ENCODE measurements at regions of chr10 and their contacts with region 1.

Region 1: GRCh38 chr10:7525314-7526016 is 114.6 kb upstream of the SFMBT2 start:
- DNase-seq: no peak
- H3K4me3 ChIP-seq: no peak overlapping the region
- H3K27ac ChIP-seq: no peak overlapping the region
- H3K4me1 ChIP-seq: no peaks in the 10 kb centered on the region
- H3K27me3 ChIP-seq: peaks cover 0 to 74% (median 0%) of the 10 kb centered on the region in 4 donors
- CTCF ChIP-seq: peak; percentile 52 to 87 (median 80)
- POLR2A ChIP-seq: no peak

Region 2: GRCh38 chr10:7318836-7319235 is 206.6 kb before region 1 on chr10:
- intact Hi-C with region 1: no loop called
- DNase-seq: no peak
- H3K4me3 ChIP-seq: no peak overlapping the region
- H3K27ac ChIP-seq: no peak overlapping the region
- H3K4me1 ChIP-seq: peaks cover 0 to 18% (median 3%) of the 10 kb centered on the region in 3 donors
- H3K27me3 ChIP-seq: no peaks in the 10 kb centered on the region
- CTCF ChIP-seq: no peak
- POLR2A ChIP-seq: no peak

Region 3: DNA sequence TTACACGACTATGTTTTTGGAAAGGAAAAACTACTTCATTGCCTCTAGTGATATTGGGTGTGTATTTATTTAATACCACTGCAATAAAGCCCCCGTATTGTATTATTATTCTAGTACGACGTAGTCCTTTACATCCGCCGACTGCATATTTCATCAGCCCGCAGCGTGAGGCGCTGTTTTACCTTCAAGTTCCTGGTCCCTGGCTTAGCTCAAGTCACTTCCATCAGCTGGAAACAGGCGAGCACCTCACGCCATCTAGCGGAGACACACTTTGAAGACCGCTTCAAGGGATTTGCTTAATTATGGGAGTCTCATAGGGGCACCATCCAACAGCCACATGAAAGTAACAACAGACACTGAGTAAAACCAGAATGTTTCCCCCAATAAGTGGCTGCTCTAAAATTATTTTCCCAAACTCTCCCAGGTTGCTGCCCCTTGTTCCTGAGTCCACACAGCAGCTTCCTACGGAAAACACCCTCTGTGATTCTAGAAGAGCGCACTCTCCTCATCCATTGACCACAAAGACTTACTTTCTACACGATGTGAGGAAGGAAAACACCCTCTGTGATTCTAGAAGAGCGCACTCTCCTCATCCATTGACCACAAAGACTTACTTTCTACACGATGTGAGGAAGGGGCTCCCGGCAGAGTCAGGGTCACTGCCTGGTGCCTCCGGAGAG is 161.9 kb after region 1 on chr10:
- intact Hi-C with region 1: loop called (anchors 5 kb)
- DNase-seq: peak; percentile 1
- H3K4me3 ChIP-seq: no peak overlapping the region
- H3K27ac ChIP-seq: no peak overlapping the region
- H3K4me1 ChIP-seq: peaks cover 0 to 8% (median 0%) of the 10 kb centered on the region in 3 donors
- H3K27me3 ChIP-seq: peaks cover 0 to 22% (median 0%) of the 10 kb centered on the region in 4 donors
- CTCF ChIP-seq: peak; percentile 86 to 93 (median 89)
- POLR2A ChIP-seq: no peak

Region 4: DNA sequence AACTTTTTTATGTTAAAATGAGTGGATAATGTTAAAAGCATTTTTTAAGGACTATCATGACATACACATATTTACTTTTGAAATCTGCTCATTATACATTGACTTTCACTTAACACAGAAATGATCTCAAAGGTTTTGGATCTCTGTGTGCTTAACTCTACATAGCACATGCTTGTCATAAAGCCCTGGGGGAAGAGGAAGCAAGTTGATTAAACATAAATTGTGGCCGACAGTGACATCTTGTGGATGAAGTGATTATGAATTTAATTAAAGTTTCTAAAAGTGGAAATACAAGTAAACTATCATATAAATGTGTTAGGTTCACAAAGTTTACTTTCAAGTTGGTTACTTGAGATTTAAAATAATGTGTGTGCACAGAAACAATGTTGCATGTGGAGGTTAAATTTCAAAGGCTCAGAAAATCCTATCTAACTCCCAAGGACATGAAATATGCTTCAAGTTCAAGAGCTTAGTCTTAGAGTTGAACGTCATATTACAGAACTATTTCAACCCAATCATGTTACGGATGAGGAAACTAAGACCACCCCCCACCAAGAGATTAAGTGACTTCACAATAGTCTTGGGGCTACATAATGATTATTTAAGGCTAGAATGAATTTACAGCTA is 1776.8 kb after region 1 on chr10:
- intact Hi-C with region 1: loop called (anchors 10 kb)
- DNase-seq: no peak
- H3K4me3 ChIP-seq: no peak overlapping the region
- H3K27ac ChIP-seq: no peak overlapping the region
- H3K4me1 ChIP-seq: no peaks in the 10 kb centered on the region
- H3K27me3 ChIP-seq: peaks cover 0 to 11% (median 0%) of the 10 kb centered on the region in 4 donors
- CTCF ChIP-seq: peak; percentile 21 to 59 (median 42)
- POLR2A ChIP-seq: no peak

Measured in esophagus squamous epithelium (tissue), 5 donors.